BJ (cell line): ENCODE measurements at regions of chr10 and their contacts with region 1.

Region 1: GRCh38 chr10:28663576-28664313 is 13.6 kb upstream of the BAMBI start:
- DNase-seq: no peak
- H3K4me3 ChIP-seq: no peak overlapping the region
- H3K27me3 ChIP-seq: peaks cover 10% of the 10 kb centered on the region
- CTCF ChIP-seq: peak; percentile 99

Region 2: DNA sequence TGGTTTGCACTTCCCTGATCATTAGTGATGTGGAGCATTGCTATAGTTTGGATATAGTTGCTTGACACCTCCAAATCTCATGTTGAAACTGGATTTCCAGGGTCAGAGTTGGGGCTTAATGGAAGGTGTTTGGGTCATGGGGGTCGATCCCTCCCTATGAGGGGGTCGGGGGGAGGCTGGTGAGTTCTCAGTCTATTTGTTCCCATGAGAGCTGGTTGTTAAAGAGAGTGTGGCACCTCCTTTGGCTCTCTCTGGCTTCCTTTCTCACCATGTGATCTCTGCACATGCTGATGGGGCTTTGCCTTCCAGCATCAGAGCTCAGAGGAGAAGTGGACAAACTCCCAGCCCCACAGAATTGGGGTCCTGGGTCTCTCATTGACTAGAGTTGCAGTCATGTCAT is 23.2 kb before region 1 on chr10:
- CTCF ChIA-PET with region 1: interaction called, 13 read pairs
- POLR2A ChIA-PET with region 1: no interaction called
- DNase-seq: no peak
- H3K4me3 ChIP-seq: no peak overlapping the region
- H3K27me3 ChIP-seq: peaks cover 7% of the 10 kb centered on the region
- CTCF ChIP-seq: no peak

Region 3: GRCh38 chr10:28991326-28992270 is 327.9 kb after region 1 on chr10:
- CTCF ChIA-PET with region 1: interaction called, 25 read pairs
- POLR2A ChIA-PET with region 1: interaction called, 3 read pairs
- DNase-seq: peak; percentile 60
- H3K4me3 ChIP-seq: no peak overlapping the region
- H3K27me3 ChIP-seq: no peaks in the 10 kb centered on the region
- CTCF ChIP-seq: peak; percentile 64

Region 4: GRCh38 chr10:29131952-29132820 is 468.4 kb after region 1 on chr10:
- CTCF ChIA-PET with region 1: interaction called, 27 read pairs
- POLR2A ChIA-PET with region 1: no interaction called
- DNase-seq: peak; percentile 16
- H3K4me3 ChIP-seq: no peak overlapping the region
- H3K27me3 ChIP-seq: no peaks in the 10 kb centered on the region
- CTCF ChIP-seq: no peak